ENCODE measurements at regions of chr10 and their contacts with region 1.

Region 1: DNA sequence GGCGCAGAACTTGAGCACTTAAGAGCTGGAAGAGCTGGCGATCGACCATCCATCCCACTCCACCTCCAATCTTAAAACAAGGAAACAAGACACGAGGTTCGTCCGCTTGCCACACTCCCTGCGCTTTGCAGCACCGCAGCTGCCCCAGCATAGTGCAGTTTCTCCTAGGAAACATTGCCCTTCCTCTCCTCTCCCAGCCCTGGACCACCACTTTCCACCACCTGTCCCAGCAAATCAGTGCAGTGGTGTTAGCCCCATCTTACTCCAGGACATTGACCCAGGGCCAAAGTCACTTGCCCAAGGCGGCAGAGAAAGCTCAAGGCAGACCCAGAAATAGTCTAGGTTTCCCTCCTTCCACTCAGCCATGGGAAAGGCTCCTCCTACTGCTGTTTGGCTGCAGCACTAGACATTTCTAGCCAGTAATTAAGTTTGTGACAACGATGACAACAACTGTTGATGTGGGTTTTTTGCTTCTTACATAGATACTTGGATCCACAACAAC is 1.5 kb upstream of the PARD3 start:
- DNase-seq: peak; percentile 28 to 44
- ATAC-seq: peak; percentile 16 to 47; a peak in 3 of 6 replicates
- H3K4me3 ChIP-seq: peak overlapping the region; percentile 98
- H3K27ac ChIP-seq: peak overlapping the region in 1 of 2 experiments; percentile 96; a peak in 3 of 6 replicates
- H3K4me1 ChIP-seq: peaks cover 28% of the 10 kb centered on the region
- CTCF ChIP-seq: no peak
- EP300 ChIP-seq: no peak
- POLR2A ChIP-seq: no peak
- RAD21 ChIP-seq: 0 out of 5 replicates have a peak, but pooled peaks of 1 of the 2 experiments have one; percentile 13

Region 2: GRCh38 chr10:34341473-34341872 is 475.1 kb before region 1 on chr10:
- CTCF ChIA-PET with region 1: no interaction called
- POLR2A ChIA-PET with region 1: no interaction called
- DNase-seq: no peak
- ATAC-seq: no peak
- H3K4me3 ChIP-seq: no peak overlapping the region
- H3K27ac ChIP-seq: no peak overlapping the region
- H3K4me1 ChIP-seq: peaks cover 58% of the 10 kb centered on the region
- CTCF ChIP-seq: no peak
- EP300 ChIP-seq: no peak
- POLR2A ChIP-seq: no peak
- RAD21 ChIP-seq: no peak

Region 3: GRCh38 chr10:34696423-34696822 is 120.1 kb before region 1 on chr10:
- CTCF ChIA-PET with region 1: no interaction called
- POLR2A ChIA-PET with region 1: no interaction called
- DNase-seq: peak; percentile 46 to 50
- ATAC-seq: peak; percentile 64 to 70; a peak in 5 of 6 replicates
- H3K4me3 ChIP-seq: no peak overlapping the region
- H3K27ac ChIP-seq: peak overlapping the region; percentile 69 to 86; a peak in 5 of 6 replicates
- H3K4me1 ChIP-seq: peaks cover 61% of the 10 kb centered on the region
- CTCF ChIP-seq: no peak
- EP300 ChIP-seq: no peak
- POLR2A ChIP-seq: no peak
- RAD21 ChIP-seq: peak; percentile 9 to 10; a peak in 1 of 5 replicates

Region 4: GRCh38 chr10:34746094-34746493 is 70.5 kb before region 1 on chr10:
- CTCF ChIA-PET with region 1: no interaction called
- POLR2A ChIA-PET with region 1: no interaction called
- DNase-seq: no peak
- ATAC-seq: peak in 1 of 2 experiments; percentile 30; a peak in 1 of 6 replicates
- H3K4me3 ChIP-seq: no peak overlapping the region
- H3K27ac ChIP-seq: no peak overlapping the region
- H3K4me1 ChIP-seq: peaks cover 22% of the 10 kb centered on the region
- CTCF ChIP-seq: no peak
- EP300 ChIP-seq: no peak
- POLR2A ChIP-seq: no peak
- RAD21 ChIP-seq: no peak

Region 5: GRCh38 chr10:34830217-34830822 is 13.8 kb after region 1 on chr10:
- CTCF ChIA-PET with region 1: interaction called, 10 read pairs
- POLR2A ChIA-PET with region 1: no interaction called
- DNase-seq: no peak
- ATAC-seq: no peak
- H3K4me3 ChIP-seq: no peak overlapping the region
- H3K27ac ChIP-seq: no peak overlapping the region
- H3K4me1 ChIP-seq: peaks cover 4% of the 10 kb centered on the region; the same call in 1 of the 3 replicates
- CTCF ChIP-seq: no peak
- EP300 ChIP-seq: no peak
- POLR2A ChIP-seq: no peak
- RAD21 ChIP-seq: no peak